ENCODE measurements at regions of chr9 and their contacts with region 1.

Region 1: DNA sequence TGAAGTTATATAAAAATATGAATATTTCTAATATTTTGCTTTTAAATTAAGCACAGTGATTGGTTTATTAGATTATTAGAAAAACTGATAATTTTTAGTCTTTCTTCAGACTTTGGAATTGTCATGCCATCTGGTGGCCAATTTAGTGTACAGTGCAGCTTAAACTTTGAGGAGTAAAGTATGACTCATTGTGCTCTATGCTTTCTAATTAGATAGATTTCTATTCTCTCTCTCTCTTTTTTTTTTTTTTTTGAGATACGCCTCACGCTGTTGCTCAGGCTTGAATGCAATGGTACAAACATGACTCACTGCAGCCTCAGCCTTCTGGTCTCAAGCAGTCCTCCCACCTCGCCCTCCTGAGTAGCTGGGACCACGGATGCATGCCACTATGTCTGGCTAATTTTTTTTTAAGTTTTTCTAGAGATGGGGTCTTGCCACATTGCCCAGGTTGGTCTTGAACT is 42.1 kb upstream of the GPR21 start:
- DNase-seq: peak; percentile 65
- H3K4me3 ChIP-seq: no peak overlapping the region
- H3K27ac ChIP-seq: peak overlapping the region; percentile 53
- H3K27me3 ChIP-seq: no peaks in the 10 kb centered on the region
- CTCF ChIP-seq: peak; percentile 70

Region 2: DNA sequence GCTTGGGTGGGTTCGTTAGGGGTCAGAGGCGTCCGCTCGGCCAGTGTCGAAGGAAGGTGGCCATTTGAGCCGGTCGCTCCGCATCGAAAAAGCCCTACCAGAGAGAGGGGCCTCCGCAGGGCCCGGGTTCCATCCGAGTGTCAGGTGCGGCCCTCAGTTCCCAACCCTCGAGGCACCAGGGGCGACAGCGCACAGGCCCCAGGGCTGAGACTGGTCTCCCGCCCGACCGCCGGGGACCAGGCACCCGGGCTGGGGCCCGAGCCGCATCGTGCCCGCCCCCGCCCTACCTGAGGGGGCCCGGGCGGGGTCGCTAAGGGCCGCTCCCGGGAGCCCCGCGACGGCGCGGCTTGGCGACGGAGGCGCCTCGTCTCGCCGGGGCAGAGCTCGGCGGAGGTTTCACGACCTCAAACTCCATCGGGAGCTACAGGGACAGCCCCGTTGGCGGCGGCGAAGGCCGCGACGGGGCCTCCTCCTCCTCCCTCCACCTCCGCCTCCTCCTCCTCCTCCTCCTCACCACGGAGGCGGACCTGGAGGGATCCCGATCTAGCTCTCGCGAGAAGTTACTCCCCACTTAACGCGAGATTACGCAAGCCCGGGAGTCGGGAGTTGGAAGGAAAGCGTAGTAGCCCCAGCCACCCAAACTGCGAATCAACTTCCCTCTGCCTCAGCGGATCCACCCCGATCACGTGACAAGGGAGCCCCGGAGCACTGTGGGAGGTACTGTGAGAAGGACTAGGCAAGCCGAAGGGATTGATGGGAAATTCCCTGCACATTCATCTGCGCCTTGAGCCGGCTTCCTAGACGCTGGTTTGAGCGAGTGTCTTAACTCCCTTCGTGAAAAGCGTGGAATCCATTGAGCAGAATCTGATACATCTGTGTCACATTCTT is 86.3 kb before region 1 on chr9 and contains the start of gene RC3H2:
- CTCF ChIA-PET with region 1: interaction called, 16 read pairs
- POLR2A ChIA-PET with region 1: interaction called, 5 read pairs
- DNase-seq: peak; percentile 100
- H3K4me3 ChIP-seq: peak within 1 kb of the TSS; percentile 82
- H3K27ac ChIP-seq: peak within 1 kb of the TSS; percentile 69
- H3K27me3 ChIP-seq: no peaks in the 10 kb centered on the region
- CTCF ChIP-seq: no peak
- polyA plus RNA-seq, gene RC3H2: 41.5 and 47.2 TPM in 2 replicates

Region 3: GRCh38 chr9:122912964-122913673 is 78.3 kb before region 1 on chr9 and contains the start of gene ZBTB6:
- CTCF ChIA-PET with region 1: interaction called, 13 read pairs
- POLR2A ChIA-PET with region 1: interaction called, 3 read pairs
- DNase-seq: peak; percentile 51
- H3K4me3 ChIP-seq: peak within 1 kb of the TSS; percentile 92
- H3K27ac ChIP-seq: peak within 1 kb of the TSS; percentile 89
- H3K27me3 ChIP-seq: no peaks in the 10 kb centered on the region
- CTCF ChIP-seq: no peak
- polyA plus RNA-seq, gene ZBTB6: 5.9 and 8.3 TPM in 2 replicates

Region 4: DNA sequence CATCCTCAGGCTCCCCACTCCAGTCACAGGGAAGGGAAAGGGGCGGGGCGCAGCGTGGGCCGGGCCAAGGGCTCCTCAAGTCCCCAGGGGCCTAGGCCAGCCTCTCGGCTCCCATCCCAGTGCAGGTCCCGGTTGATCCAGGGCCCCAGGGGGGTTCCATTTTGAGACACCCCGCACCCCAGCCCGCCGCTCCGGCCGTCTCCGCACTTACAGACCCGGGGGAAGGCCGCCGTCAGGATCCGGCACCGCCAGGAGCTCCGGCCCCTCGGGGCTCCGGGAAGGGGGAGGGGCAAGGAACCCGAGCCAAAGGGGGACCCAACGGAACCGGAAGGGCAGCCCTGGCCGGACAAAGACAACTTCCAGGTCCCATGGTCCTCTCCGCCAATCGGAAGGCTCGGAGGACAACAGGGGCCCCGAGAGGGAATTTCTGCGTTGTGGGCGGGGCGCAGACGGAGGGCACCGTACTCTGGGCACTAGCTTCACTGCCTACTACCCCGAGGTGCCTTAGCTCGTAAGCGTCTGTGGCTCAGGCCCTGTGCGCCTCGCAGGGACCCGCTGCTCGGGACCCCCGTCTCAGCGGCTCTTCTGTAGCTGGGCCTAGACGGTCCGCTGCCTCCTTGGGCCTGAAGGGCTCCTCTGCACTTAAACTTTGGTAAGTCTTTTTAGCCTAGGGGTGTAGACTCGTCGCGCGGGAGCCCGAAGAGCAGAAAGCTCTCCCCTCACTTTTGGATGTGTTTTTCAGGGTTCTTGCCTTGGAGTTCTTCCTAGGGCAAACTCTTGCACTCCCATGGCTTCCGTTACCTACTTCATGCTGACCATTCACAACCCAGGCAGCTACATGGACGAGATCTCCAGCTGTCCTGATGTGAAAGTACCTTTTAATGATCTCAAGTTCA is 59.9 kb before region 1 on chr9 and contains the start of gene ZBTB26:
- CTCF ChIA-PET with region 1: interaction called, 8 read pairs
- POLR2A ChIA-PET with region 1: interaction called, 14 read pairs
- DNase-seq: no peak
- H3K4me3 ChIP-seq: peak within 1 kb of the TSS; percentile 92
- H3K27ac ChIP-seq: peak within 1 kb of the TSS; percentile 75
- H3K27me3 ChIP-seq: no peaks in the 10 kb centered on the region
- CTCF ChIP-seq: 0 out of 2 replicates have a peak, but pooled peaks have one; percentile 6
- polyA plus RNA-seq, gene ZBTB26: 8.2 and 9.6 TPM in 2 replicates

Region 5: GRCh38 chr9:123058834-123059233 is 67.4 kb after region 1 on chr9:
- CTCF ChIA-PET with region 1: no interaction called
- POLR2A ChIA-PET with region 1: no interaction called
- DNase-seq: no peak
- H3K4me3 ChIP-seq: no peak overlapping the region
- H3K27ac ChIP-seq: no peak overlapping the region
- H3K27me3 ChIP-seq: no peaks in the 10 kb centered on the region
- CTCF ChIP-seq: no peak

Measured in AG04450 (cell line).